ENCODE measurements at regions of chr3 and their contacts with region 1.

Region 1: GRCh38 chr3:56997675-56998074 is 62.8 kb upstream of the SPATA12 start:
- DNase-seq: no peak
- H3K4me3 ChIP-seq: no peak overlapping the region
- H3K4me3 Mint-ChIP-seq: no peak overlapping the region
- H3K27ac ChIP-seq: no peak overlapping the region
- H3K27ac Mint-ChIP-seq: peak overlapping the region in 1 of 7 donors; percentile 90
- H3K4me1 ChIP-seq: no peaks in the 10 kb centered on the region
- H3K4me1 Mint-ChIP-seq: peaks cover 3 to 6% (median 4%) of the 10 kb centered on the region in 4 donors
- H3K27me3 ChIP-seq: no peaks in the 10 kb centered on the region
- H3K27me3 Mint-ChIP-seq: peaks cover 1 to 3% of the 10 kb centered on the region in 2 donors

Region 2: DNA sequence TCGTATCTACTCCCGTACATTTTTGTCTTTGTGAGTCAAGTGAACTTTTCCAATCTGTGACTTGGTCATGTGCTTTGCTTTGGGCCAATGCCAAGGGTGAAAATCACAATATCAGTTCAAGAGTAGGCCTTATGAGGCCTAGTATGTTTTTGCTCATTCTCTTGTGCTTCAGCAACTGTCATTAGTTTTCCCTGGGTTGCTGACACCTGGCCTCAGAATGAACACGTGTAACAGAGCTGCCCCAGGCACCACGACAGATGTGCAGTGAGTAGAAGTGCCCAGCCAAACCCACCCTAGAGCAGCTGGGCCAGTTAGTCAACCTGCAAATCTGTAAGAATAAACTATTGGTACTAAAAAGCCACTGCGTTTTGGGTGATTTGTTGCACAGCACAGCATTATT is 1050.3 kb before region 1 on chr3:
- CTCF ChIA-PET with region 1: no interaction called
- POLR2A ChIA-PET with region 1: no interaction called
- intact Hi-C with region 1: no loop called
- DNase-seq: no peak
- H3K4me3 ChIP-seq: no peak overlapping the region
- H3K4me3 Mint-ChIP-seq: no peak overlapping the region
- H3K27ac ChIP-seq: no peak overlapping the region
- H3K27ac Mint-ChIP-seq: no peak overlapping the region
- H3K4me1 ChIP-seq: no peaks in the 10 kb centered on the region
- H3K4me1 Mint-ChIP-seq: no peaks in the 10 kb centered on the region
- H3K27me3 ChIP-seq: no peaks in the 10 kb centered on the region
- H3K27me3 Mint-ChIP-seq: no peaks in the 10 kb centered on the region

Region 3: DNA sequence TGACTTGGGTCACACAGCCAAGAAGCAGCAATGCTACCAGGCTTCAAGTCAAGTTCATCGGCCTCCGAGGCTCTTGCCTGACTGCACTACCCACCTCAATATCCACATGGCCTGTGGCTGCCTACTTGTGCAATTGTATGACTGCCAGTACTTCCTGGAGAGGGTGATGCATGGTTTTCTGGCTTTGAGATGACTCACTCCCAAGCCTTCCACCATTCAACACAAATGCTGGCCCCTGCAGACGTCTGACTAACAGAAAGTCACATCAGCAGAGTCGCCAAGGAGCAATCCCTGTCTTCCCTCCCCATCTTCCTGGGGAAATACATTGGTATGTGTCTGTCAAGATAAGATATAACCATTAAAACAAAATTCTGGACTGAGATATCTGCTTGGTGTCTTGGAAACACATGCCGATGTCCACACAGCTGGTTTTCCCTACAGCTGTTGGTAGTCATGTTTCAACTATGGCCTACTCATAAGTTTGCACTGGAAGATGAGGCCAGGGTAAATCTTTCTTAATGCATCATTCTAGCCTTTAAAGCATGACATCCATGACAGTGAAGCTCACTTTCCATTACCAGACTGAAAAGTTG is 16.8 kb before region 1 on chr3:
- CTCF ChIA-PET with region 1: interaction called, 14 read pairs
- POLR2A ChIA-PET with region 1: no interaction called
- intact Hi-C with region 1: no loop called
- DNase-seq: no peak
- H3K4me3 ChIP-seq: no peak overlapping the region
- H3K4me3 Mint-ChIP-seq: no peak overlapping the region
- H3K27ac ChIP-seq: no peak overlapping the region
- H3K27ac Mint-ChIP-seq: no peak overlapping the region
- H3K4me1 ChIP-seq: no peaks in the 10 kb centered on the region
- H3K4me1 Mint-ChIP-seq: peaks cover 3 to 12% (median 8%) of the 10 kb centered on the region in 4 donors
- H3K27me3 ChIP-seq: no peaks in the 10 kb centered on the region
- H3K27me3 Mint-ChIP-seq: no peaks in the 10 kb centered on the region

Region 4: GRCh38 chr3:57007513-57008460 is 10.1 kb after region 1 on chr3:
- CTCF ChIA-PET with region 1: interaction called, 18 read pairs
- POLR2A ChIA-PET with region 1: interaction called, 3 read pairs
- intact Hi-C with region 1: no loop called
- DNase-seq: no peak
- H3K4me3 ChIP-seq: no peak overlapping the region
- H3K4me3 Mint-ChIP-seq: no peak overlapping the region
- H3K27ac ChIP-seq: no peak overlapping the region
- H3K27ac Mint-ChIP-seq: peak overlapping the region in 2 of 7 donors; percentile 36 to 66
- H3K4me1 ChIP-seq: no peaks in the 10 kb centered on the region
- H3K4me1 Mint-ChIP-seq: peaks cover 0 to 5% (median 3%) of the 10 kb centered on the region in 4 donors
- H3K27me3 ChIP-seq: no peaks in the 10 kb centered on the region
- H3K27me3 Mint-ChIP-seq: peaks cover 2 to 4% of the 10 kb centered on the region in 2 donors

Region 5: DNA sequence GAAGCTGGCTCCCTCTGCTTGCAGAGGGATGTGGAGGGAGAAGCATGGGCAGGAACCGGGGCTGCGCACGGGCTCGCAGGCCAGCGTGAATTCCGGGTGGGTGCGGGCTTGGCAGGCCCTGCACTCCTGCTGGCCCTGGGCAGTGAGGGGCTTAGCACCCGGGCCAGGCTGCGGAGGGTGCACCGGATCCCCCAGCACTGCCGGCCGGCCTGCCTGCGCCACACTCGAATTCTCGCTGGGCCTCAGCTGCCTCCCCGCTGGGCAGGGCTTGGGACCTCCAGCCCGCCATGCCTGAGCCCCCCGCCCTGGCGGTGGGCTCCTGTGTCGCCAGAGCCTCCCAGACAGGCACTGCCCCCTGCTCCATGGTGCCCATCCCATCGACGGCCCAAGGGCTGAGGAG is 15.2 kb after region 1 on chr3:
- CTCF ChIA-PET with region 1: interaction called, 11 read pairs
- POLR2A ChIA-PET with region 1: interaction called, 3 read pairs
- intact Hi-C with region 1: no loop called
- DNase-seq: no peak
- H3K4me3 ChIP-seq: no peak overlapping the region
- H3K4me3 Mint-ChIP-seq: no peak overlapping the region
- H3K27ac ChIP-seq: no peak overlapping the region
- H3K27ac Mint-ChIP-seq: no peak overlapping the region
- H3K4me1 ChIP-seq: no peaks in the 10 kb centered on the region
- H3K4me1 Mint-ChIP-seq: peaks cover 0 to 1% (median under 1%) of the 10 kb centered on the region in 4 donors
- H3K27me3 ChIP-seq: no peaks in the 10 kb centered on the region
- H3K27me3 Mint-ChIP-seq: peaks cover 5 to 7% of the 10 kb centered on the region in 2 donors

Region 6: GRCh38 chr3:57047974-57048671 is 50.4 kb after region 1 on chr3:
- CTCF ChIA-PET with region 1: no interaction called
- POLR2A ChIA-PET with region 1: no interaction called
- intact Hi-C with region 1: no loop called
- DNase-seq: no peak
- H3K4me3 ChIP-seq: no peak overlapping the region
- H3K4me3 Mint-ChIP-seq: no peak overlapping the region
- H3K27ac ChIP-seq: no peak overlapping the region
- H3K27ac Mint-ChIP-seq: no peak overlapping the region
- H3K4me1 ChIP-seq: no peaks in the 10 kb centered on the region
- H3K4me1 Mint-ChIP-seq: no peaks in the 10 kb centered on the region
- H3K27me3 ChIP-seq: no peaks in the 10 kb centered on the region
- H3K27me3 Mint-ChIP-seq: peaks cover 7 to 11% of the 10 kb centered on the region in 2 donors

Measured in CD4-positive, alpha-beta memory T cell (primary cell).